Naive thymus-derived CD4-positive, alpha-beta T cell (primary cell): ENCODE measurements at regions of chr15 and their contacts with region 1.

Region 1: GRCh38 chr15:85858586-85859375 is 64.1 kb upstream of the KLHL25 start:
- DNase-seq: peak; percentile 48 to 77 (median 69)
- ATAC-seq: peak; percentile 91
- H3K4me3 ChIP-seq: no peak overlapping the region
- H3K4me3 Mint-ChIP-seq: peak overlapping the region in 8 of 10 donors; percentile 27 to 83 (median 45)
- H3K27ac ChIP-seq: no peak overlapping the region
- H3K27ac Mint-ChIP-seq: peak overlapping the region in 2 of 9 donors; percentile 52 to 65
- H3K4me1 ChIP-seq: peaks cover 0 to 7% of the 10 kb centered on the region in 2 donors
- H3K4me1 Mint-ChIP-seq: peaks cover 0 to 21% (median 4%) of the 10 kb centered on the region in 7 donors
- H3K27me3 ChIP-seq: no peaks in the 10 kb centered on the region
- H3K27me3 Mint-ChIP-seq: peaks cover 18 to 33% (median 27%) of the 10 kb centered on the region in 5 donors

Region 2: GRCh38 chr15:87604857-87605446 is 1746.2 kb after region 1 on chr15:
- CTCF ChIA-PET with region 1: no interaction called
- POLR2A ChIA-PET with region 1: no interaction called
- intact Hi-C with region 1: loop called in 1 of 2 experiments (anchors 10 kb)
- DNase-seq: no peak
- ATAC-seq: no peak
- H3K4me3 ChIP-seq: no peak overlapping the region
- H3K4me3 Mint-ChIP-seq: no peak overlapping the region
- H3K27ac ChIP-seq: no peak overlapping the region
- H3K27ac Mint-ChIP-seq: no peak overlapping the region
- H3K4me1 ChIP-seq: no peaks in the 10 kb centered on the region
- H3K4me1 Mint-ChIP-seq: no peaks in the 10 kb centered on the region
- H3K27me3 ChIP-seq: no peaks in the 10 kb centered on the region
- H3K27me3 Mint-ChIP-seq: peaks cover 0 to 9% (median 5%) of the 10 kb centered on the region in 5 donors